HEK293 (cell line): ENCODE measurements at regions of chr1 and their contacts with region 1.

Region 1: DNA sequence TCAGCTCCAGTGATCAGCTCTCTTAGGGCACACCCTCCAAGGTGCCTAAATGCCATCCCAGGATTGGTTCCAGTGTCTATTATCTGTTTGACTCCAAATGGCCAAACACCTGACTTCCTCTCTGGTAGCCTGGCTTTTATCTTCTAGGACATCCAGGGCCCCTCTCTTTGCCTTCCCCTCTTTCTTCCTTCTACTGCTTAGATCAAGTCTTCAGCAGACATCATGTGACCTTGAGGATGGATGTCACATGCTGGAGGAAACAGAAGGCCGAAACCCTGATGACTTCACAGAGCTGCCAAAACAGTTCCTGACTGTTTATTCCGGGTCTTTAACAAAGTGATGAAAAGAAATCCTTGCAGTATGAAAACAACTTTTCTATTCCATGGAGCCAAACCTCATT is 24.4 kb upstream of the WDR26 start:
- H3K4me3 ChIP-seq: no peak overlapping the region
- H3K27ac ChIP-seq: no peak overlapping the region
- H3K4me1 ChIP-seq: no peaks in the 10 kb centered on the region; the same call in 1 of the 2 replicates
- CTCF ChIP-seq: no peak

Region 2: DNA sequence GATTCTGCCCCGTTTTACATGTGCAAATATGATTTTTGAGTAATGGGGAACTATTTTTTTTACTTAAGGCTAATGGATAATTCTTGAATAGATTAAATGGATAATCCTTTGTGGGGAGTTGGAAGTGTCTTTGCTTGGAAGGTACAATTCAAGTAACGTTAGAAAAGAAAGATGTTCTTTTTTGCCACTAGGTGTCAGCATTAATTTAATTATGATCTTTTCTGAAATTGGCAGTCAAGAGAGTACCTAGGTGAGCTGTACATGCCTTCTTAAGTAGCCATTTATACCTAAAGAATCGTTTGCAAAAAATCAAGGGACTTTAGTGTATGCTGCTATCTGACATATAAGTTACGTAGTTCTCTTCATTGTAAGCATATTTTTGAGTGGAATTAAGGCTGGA is 342.9 kb before region 1 on chr1:
- CTCF ChIA-PET with region 1: interaction called, 27 read pairs
- POLR2A ChIA-PET with region 1: no interaction called
- H3K4me3 ChIP-seq: no peak overlapping the region
- H3K27ac ChIP-seq: no peak overlapping the region
- H3K4me1 ChIP-seq: peaks cover 5% of the 10 kb centered on the region
- CTCF ChIP-seq: no peak

Region 3: DNA sequence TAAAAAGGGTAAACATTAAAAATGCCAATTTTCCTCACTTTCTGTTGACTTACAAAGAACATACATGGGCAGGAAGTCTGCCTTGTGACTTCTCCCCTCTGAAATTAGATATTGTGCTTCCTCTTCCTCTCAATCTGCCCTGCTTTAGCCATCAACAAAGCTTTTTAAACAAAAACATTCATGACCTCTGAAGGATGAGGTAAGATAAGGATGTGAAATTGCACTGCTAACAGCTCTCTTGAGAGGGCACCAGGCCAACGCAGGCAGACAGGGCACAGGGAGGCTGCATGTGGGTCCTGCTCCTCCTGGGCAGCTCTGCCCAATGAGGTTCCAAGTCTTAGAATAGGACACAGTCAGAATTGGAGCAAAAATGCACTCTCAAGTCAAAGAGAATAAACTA is 213.8 kb before region 1 on chr1:
- CTCF ChIA-PET with region 1: no interaction called
- POLR2A ChIA-PET with region 1: no interaction called
- H3K4me3 ChIP-seq: no peak overlapping the region
- H3K27ac ChIP-seq: no peak overlapping the region
- H3K4me1 ChIP-seq: no peaks in the 10 kb centered on the region
- CTCF ChIP-seq: no peak

Region 4: GRCh38 chr1:224300314-224300713 is 158.7 kb before region 1 on chr1:
- CTCF ChIA-PET with region 1: no interaction called
- POLR2A ChIA-PET with region 1: no interaction called
- H3K4me3 ChIP-seq: no peak overlapping the region
- H3K27ac ChIP-seq: no peak overlapping the region
- H3K4me1 ChIP-seq: no peaks in the 10 kb centered on the region
- CTCF ChIP-seq: no peak

Region 5: DNA sequence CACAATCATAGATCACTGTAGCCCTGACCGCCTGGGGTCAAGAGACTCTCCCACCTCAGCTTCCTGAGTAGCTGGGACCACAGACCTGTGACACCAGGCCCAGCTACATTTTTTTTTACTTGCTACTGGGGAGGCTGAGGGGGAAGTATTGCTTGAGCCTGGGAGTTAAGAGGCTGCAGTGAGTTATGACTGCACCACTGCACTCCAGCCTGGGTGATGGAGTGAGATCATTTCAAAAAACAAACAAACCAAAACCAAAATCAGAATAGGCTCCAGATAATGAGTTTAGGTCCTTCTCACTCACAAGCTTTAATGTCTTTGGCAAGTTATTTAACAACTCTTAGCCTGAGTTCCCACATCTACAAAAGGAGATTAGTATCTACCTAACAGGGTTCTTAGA is 47.2 kb before region 1 on chr1:
- CTCF ChIA-PET with region 1: interaction called, 20 read pairs
- POLR2A ChIA-PET with region 1: no interaction called
- H3K4me3 ChIP-seq: no peak overlapping the region
- H3K27ac ChIP-seq: no peak overlapping the region
- H3K4me1 ChIP-seq: peaks cover 7% of the 10 kb centered on the region
- CTCF ChIP-seq: no peak

Region 6: DNA sequence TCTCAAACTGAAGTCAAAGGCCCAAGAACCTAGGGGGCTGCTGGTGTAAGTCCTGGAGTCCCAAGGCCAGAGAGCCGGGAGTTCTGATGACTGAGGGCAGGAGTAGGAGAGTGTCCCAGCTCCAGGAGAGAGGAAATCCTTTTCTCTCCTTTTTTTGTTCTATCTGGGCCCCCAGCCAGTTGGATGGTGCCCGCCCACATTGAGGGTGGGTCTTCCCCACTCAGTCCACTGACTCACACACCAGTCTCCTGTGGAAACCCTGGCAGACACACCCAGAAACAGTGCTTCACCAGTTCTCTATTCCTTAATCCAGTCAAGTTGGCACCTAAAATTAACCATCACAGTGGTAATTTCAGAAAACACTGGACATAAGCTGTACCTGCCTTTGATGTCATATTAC is 11.7 kb before region 1 on chr1:
- CTCF ChIA-PET with region 1: interaction called, 28 read pairs
- POLR2A ChIA-PET with region 1: interaction called, 4 read pairs
- H3K4me3 ChIP-seq: no peak overlapping the region
- H3K27ac ChIP-seq: no peak overlapping the region
- H3K4me1 ChIP-seq: no peaks in the 10 kb centered on the region
- CTCF ChIP-seq: no peak

Region 7: GRCh38 chr1:224922404-224923164 is 463.6 kb after region 1 on chr1:
- CTCF ChIA-PET with region 1: interaction called, 25 read pairs
- POLR2A ChIA-PET with region 1: no interaction called
- H3K4me3 ChIP-seq: no peak overlapping the region
- H3K27ac ChIP-seq: no peak overlapping the region
- H3K4me1 ChIP-seq: no peaks in the 10 kb centered on the region
- CTCF ChIP-seq: peak; percentile 87